ENCODE measurements at regions of chr2 and their contacts with region 1.

Region 1: DNA sequence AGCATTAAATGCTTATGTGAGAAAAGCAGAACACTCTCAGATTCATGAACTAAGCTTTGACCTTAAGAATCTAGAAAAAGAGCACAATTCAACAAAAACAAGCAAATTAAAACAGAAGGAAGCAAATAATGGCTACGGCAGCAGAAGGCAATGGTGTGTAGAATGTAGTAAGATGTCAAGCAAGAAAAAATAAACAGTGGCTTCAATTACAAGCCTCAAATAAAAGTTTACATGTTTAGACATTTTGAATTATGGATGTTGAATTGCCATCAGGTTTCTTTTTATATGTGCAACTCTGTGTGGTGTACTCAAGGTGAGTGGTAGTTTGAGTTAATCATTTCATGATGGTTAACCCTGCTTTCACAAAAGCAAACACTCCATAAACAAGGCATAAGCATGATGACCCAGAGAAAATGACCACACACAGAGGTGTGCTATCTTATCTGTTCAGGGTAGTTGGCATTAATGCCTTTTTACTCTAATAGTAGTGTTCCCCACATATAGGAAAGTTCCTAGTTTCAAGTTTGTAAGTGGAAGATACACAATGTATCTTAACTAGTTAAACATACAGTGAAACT is 207.1 kb downstream of the FIGN start:
- DNase-seq: no peak

Region 2: DNA sequence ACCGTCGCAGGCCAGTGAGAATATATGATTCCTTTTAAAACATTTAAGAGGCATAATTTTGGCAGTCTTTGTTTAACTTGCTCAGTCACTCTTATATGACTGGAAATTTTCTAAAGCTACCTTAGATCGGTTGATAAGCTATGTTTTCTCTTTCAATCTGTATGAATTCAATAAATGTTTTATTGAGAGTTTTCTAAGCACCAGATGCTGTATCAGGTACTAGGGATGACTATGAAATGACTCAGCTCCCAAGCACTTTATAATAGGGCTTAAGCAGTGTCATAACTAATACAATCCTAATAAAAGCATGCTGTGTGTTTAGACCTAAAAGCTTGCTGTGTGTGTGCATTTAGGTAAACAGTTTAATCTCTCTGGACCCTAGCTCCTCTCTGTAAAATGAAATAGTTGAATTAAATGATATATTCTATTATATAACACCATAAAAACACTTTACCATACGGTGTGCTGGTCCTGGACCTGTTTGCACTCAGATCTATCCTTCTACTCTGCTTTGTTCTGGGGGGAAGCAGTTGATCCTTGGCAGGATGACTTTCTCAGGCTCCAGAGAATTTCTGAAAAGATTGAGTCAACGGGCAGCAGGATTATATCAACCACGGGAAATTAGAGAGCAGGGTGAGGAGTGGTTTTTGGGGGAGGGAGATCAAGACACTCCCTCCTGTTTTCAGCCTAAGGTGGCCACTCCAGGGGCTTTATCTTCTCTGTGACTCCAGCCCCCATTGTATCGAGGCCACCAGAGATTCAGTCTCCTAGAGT is 1452.7 kb after region 1 on chr2:
- intact Hi-C with region 1: loop called in 1 of 2 experiments (anchors 5 kb)
- DNase-seq: no peak